Adrenal gland (tissue), 19 donors: ENCODE measurements at regions of chr12 and their contacts with region 1.

Region 1: GRCh38 chr12:92649511-92650227 is 53.1 kb upstream of the PLEKHG7 start:
- DNase-seq: peak; percentile 65 to 86 (median 75)
- H3K4me3 ChIP-seq: no peak overlapping the region
- H3K27ac ChIP-seq: no peak overlapping the region
- H3K4me1 ChIP-seq: no peaks in the 10 kb centered on the region
- H3K27me3 ChIP-seq: no peaks in the 10 kb centered on the region
- CTCF ChIP-seq: peak; percentile 52 to 90 (median 83)
- POLR2A ChIP-seq: no peak

Region 2: GRCh38 chr12:91370086-91370868 is 1279.4 kb before region 1 on chr12:
- intact Hi-C with region 1: loop called in 1 of 2 experiments (anchors 10 kb)
- DNase-seq: no peak
- H3K4me3 ChIP-seq: no peak overlapping the region
- H3K27ac ChIP-seq: no peak overlapping the region
- H3K4me1 ChIP-seq: no peaks in the 10 kb centered on the region
- H3K27me3 ChIP-seq: no peaks in the 10 kb centered on the region
- CTCF ChIP-seq: no peak
- POLR2A ChIP-seq: no peak

Region 3: GRCh38 chr12:92608151-92609091 is 41.2 kb before region 1 on chr12:
- intact Hi-C with region 1: no loop called
- DNase-seq: peak in 3 of 7 donors; percentile 23 to 59 (median 30)
- H3K4me3 ChIP-seq: no peak overlapping the region
- H3K27ac ChIP-seq: no peak overlapping the region
- H3K4me1 ChIP-seq: peaks cover 6 to 8% of the 10 kb centered on the region in 2 donors
- H3K27me3 ChIP-seq: no peaks in the 10 kb centered on the region
- CTCF ChIP-seq: peak; percentile 22 to 64 (median 55)
- POLR2A ChIP-seq: no peak